ENCODE measurements at regions of chr17 and their contacts with region 1.

Region 1: GRCh38 chr17:29608891-29609361 is 13.8 kb downstream of the CORO6 start:
- DNase-seq: peak in 1 of 9 experiments; percentile 16
- ATAC-seq: no peak
- H3K4me3 ChIP-seq: no peak overlapping the region
- H3K4me3 Mint-ChIP-seq: no peak overlapping the region
- H3K27ac ChIP-seq: no peak overlapping the region
- H3K27ac Mint-ChIP-seq: no peak overlapping the region
- H3K4me1 ChIP-seq: peaks cover 13% of the 10 kb centered on the region
- H3K4me1 Mint-ChIP-seq: peaks cover 3% of the 10 kb centered on the region
- H3K27me3 ChIP-seq: no peaks in the 10 kb centered on the region
- H3K27me3 Mint-ChIP-seq: no peaks in the 10 kb centered on the region
- CTCF ChIP-seq: no peak

Region 2: DNA sequence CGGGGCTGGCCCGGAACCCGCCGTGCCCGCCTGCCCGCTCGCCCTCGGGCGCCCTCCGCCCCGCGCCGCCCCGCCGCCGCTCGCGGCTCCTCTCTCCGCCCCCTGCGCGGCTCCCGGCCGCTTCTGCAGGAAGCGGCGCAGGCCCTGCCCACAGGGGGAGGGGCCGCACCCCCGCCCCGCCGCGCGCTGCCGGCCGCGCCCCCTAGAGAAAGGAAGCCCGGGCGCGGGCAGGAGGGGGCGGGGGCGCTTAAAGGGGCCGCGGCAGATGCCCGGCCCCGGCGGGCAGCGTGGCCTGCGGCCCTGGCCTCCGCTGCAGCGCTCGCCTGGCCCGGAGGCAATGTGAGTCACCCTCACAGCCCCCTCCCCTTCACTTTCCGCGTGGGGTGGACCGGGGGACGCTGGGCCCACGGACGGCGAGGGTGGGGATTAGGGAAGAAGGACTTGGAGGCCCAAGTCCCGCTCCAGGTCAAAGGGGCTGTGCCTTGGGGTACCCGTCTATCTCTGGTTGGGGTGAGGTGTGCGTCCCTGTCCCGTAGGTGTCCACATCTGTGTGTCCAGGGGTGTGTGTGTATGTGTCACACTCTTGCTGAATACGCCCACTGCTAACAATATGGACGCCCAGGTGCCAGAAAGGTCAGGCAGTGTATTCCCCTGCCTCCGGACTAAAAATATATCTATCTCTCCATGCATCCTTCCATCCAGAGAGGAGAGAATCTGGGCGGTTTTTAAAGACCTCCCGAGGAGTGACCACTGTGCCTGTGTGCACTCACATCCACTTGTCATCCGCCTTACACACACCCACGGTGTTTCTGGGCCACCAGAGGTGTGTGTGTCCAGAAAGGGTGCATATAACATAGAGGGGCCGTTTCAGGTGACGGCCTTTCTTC is 19.2 kb before region 1 on chr17 and contains the start of gene GIT1:
- CTCF ChIA-PET with region 1: interaction called, 216 read pairs
- POLR2A ChIA-PET with region 1: interaction called, 63 read pairs
- intact Hi-C with region 1: no loop called
- DNase-seq: peak; percentile 59 to 93 (median 83)
- ATAC-seq: peak; percentile 86
- H3K4me3 ChIP-seq: peak within 1 kb of the TSS; percentile 73 to 75
- H3K4me3 Mint-ChIP-seq: peak within 1 kb of the TSS; percentile 93
- H3K27ac ChIP-seq: peak within 1 kb of the TSS; percentile 18 to 64
- H3K27ac Mint-ChIP-seq: peak within 1 kb of the TSS; percentile 89
- H3K4me1 ChIP-seq: peaks cover 78% of the 10 kb centered on the region
- H3K4me1 Mint-ChIP-seq: peaks cover 59% of the 10 kb centered on the region
- H3K27me3 ChIP-seq: no peaks in the 10 kb centered on the region
- H3K27me3 Mint-ChIP-seq: no peaks in the 10 kb centered on the region
- CTCF ChIP-seq: no peak
- total RNA-seq, gene GIT1: 25.8 to 27.0 TPM

Region 3: DNA sequence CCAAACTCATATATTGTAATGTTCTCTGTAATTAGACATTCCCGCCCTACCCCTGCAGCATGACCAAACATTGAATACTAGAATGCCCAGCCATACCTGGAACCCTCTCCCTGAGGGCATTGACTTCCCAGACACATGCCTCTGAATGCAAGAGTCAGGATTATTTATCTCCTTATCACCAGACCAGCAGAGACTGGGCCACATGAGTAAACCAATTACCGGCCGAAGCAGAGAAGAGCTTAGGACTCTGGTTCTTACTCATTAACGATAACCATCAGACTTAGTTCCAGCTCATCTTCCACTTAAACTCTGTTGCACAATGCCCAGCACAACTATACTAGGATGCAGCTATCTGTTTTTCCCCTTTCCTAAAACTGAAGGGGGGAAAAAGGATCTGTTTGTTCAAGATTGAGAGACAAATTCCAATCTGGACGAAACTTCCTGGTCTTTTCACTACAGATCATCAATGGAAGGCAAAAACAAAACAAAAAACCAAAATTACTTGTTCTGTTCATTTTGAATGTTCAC is 102.0 kb after region 1 on chr17:
- CTCF ChIA-PET with region 1: no interaction called
- POLR2A ChIA-PET with region 1: no interaction called
- intact Hi-C with region 1: no loop called
- DNase-seq: no peak
- ATAC-seq: no peak
- H3K4me3 ChIP-seq: no peak overlapping the region
- H3K4me3 Mint-ChIP-seq: no peak overlapping the region
- H3K27ac ChIP-seq: no peak overlapping the region
- H3K27ac Mint-ChIP-seq: peak overlapping the region; percentile 84
- H3K4me1 ChIP-seq: peaks cover 36% of the 10 kb centered on the region
- H3K4me1 Mint-ChIP-seq: peaks cover 73% of the 10 kb centered on the region
- H3K27me3 ChIP-seq: no peaks in the 10 kb centered on the region
- H3K27me3 Mint-ChIP-seq: no peaks in the 10 kb centered on the region
- CTCF ChIP-seq: no peak